CD14-positive monocyte (primary cell): ENCODE measurements at regions of chr7 and their contacts with region 1.

Region 1: GRCh38 chr7:29274146-29275017 is 79.8 kb downstream of the CHN2 start:
- DNase-seq: peak; percentile 5 to 20 (median 14)
- H3K4me3 ChIP-seq: no peak overlapping the region
- H3K4me3 Mint-ChIP-seq: no peak overlapping the region
- H3K27ac ChIP-seq: no peak overlapping the region
- H3K27ac Mint-ChIP-seq: peak overlapping the region in 2 of 7 donors; percentile 33 to 43
- H3K4me1 ChIP-seq: peaks cover 29 to 38% of the 10 kb centered on the region in 2 donors
- H3K4me1 Mint-ChIP-seq: peaks cover 45% of the 10 kb centered on the region
- H3K27me3 ChIP-seq: no peaks in the 10 kb centered on the region
- H3K27me3 Mint-ChIP-seq: peaks cover 0 to 2% (median 0%) of the 10 kb centered on the region in 3 donors
- CTCF ChIP-seq: no peak

Region 2: GRCh38 chr7:29319719-29320521 is 45.5 kb after region 1 on chr7:
- intact Hi-C with region 1: loop called in 1 of 2 experiments (anchors 5 kb)
- DNase-seq: peak; percentile 80 to 86 (median 85)
- H3K4me3 ChIP-seq: no peak overlapping the region
- H3K4me3 Mint-ChIP-seq: peak overlapping the region in 1 of 2 donors; percentile 68
- H3K27ac ChIP-seq: peak overlapping the region; percentile 30 to 68
- H3K27ac Mint-ChIP-seq: peak overlapping the region; percentile 63 to 95 (median 69)
- H3K4me1 ChIP-seq: peaks cover 17 to 19% of the 10 kb centered on the region in 2 donors
- H3K4me1 Mint-ChIP-seq: peaks cover 19% of the 10 kb centered on the region
- H3K27me3 ChIP-seq: no peaks in the 10 kb centered on the region
- H3K27me3 Mint-ChIP-seq: peaks cover 0 to 3% (median 1%) of the 10 kb centered on the region in 3 donors
- CTCF ChIP-seq: no peak